Naive thymus-derived CD4-positive, alpha-beta T cell (primary cell): ENCODE measurements at regions of chr7 and their contacts with region 1.

Region 1: GRCh38 chr7:2978403-2978802 is 65.3 kb downstream of the CARD11 start:
- DNase-seq: peak in 8 of 9 donors; percentile 29 to 80 (median 45)
- ATAC-seq: peak; percentile 78
- H3K4me3 ChIP-seq: peak overlapping the region; percentile 45
- H3K4me3 Mint-ChIP-seq: peak overlapping the region; percentile 82 to 93 (median 87)
- H3K27ac ChIP-seq: peak overlapping the region; percentile 65
- H3K27ac Mint-ChIP-seq: peak overlapping the region; percentile 80 to 96 (median 91)
- H3K4me1 ChIP-seq: peaks cover 24 to 47% of the 10 kb centered on the region in 2 donors
- H3K4me1 Mint-ChIP-seq: peaks cover 57 to 80% (median 68%) of the 10 kb centered on the region in 7 donors
- H3K27me3 ChIP-seq: no peaks in the 10 kb centered on the region
- H3K27me3 Mint-ChIP-seq: no peaks in the 10 kb centered on the region

Region 2: GRCh38 chr7:1503816-1504775 is 1474.3 kb before region 1 on chr7 and contains the start of gene INTS1:
- CTCF ChIA-PET with region 1: no interaction called
- POLR2A ChIA-PET with region 1: no interaction called
- intact Hi-C with region 1: no loop called
- DNase-seq: peak; percentile 82 to 93 (median 88)
- ATAC-seq: peak; percentile 96
- H3K4me3 ChIP-seq: peak within 1 kb of the TSS; percentile 77
- H3K4me3 Mint-ChIP-seq: peak within 1 kb of the TSS; percentile 80 to 94 (median 87)
- H3K27ac ChIP-seq: peak within 1 kb of the TSS; percentile 77
- H3K27ac Mint-ChIP-seq: peak within 1 kb of the TSS in 8 of 9 donors; percentile 59 to 88 (median 77)
- H3K4me1 ChIP-seq: peaks cover 18 to 35% of the 10 kb centered on the region in 2 donors
- H3K4me1 Mint-ChIP-seq: peaks cover 35 to 60% (median 42%) of the 10 kb centered on the region in 7 donors
- H3K27me3 ChIP-seq: no peaks in the 10 kb centered on the region
- H3K27me3 Mint-ChIP-seq: peaks cover 0 to 4% (median 0%) of the 10 kb centered on the region in 5 donors
- total RNA-seq, gene INTS1: 82.0 to 157 (median 111) TPM

Region 3: DNA sequence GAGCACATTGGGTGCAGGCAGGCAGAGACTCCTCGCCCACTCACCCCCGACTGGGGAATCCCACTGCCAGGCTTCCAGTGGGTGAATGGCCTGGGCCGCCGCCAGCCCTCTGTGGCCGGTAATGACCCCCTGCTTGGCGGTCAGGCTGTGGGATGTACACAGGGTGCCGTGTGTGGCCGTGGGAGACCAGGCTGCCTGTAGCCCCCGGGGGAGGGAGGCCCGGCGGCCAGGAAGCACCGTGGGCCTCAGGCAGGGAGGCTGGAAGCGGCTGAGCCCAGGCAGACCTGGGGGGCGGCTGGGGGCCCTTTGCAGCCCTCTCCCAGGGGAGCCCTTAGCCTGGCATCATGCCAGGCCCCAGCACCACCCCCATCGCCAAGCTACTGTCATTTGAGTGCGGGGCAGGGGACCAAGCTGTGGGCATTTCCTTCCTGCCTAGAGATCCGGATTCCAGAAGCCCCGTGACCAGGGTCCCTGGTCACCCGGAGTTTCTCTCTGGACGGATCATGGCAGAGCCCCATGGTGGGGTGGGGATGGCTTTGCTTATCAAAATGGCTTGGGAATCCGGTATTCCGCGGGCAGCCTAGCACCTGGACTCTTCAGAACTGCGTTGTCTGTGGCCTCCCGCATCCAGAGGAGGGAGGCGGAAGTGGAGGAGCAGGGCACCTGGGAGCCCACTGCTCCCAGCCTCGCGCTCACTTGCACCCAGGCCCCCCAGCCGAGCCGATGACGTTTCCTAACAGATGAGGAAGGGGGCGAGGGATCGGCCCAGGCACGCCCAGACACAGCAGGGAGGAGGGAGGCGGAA is 345.5 kb before region 1 on chr7:
- CTCF ChIA-PET with region 1: no interaction called
- POLR2A ChIA-PET with region 1: no interaction called
- intact Hi-C with region 1: no loop called
- DNase-seq: peak in 8 of 9 donors; percentile 24 to 73 (median 37)
- ATAC-seq: no peak
- H3K4me3 ChIP-seq: peak overlapping the region; percentile 58
- H3K4me3 Mint-ChIP-seq: peak overlapping the region; percentile 86 to 96 (median 89)
- H3K27ac ChIP-seq: peak overlapping the region; percentile 79
- H3K27ac Mint-ChIP-seq: peak overlapping the region in 8 of 9 donors; percentile 72 to 88 (median 81)
- H3K4me1 ChIP-seq: peaks cover 3 to 16% of the 10 kb centered on the region in 2 donors
- H3K4me1 Mint-ChIP-seq: peaks cover 0 to 19% (median 15%) of the 10 kb centered on the region in 7 donors
- H3K27me3 ChIP-seq: no peaks in the 10 kb centered on the region
- H3K27me3 Mint-ChIP-seq: peaks cover 0 to 4% (median 0%) of the 10 kb centered on the region in 5 donors

Region 4: GRCh38 chr7:2870471-2870931 is 107.9 kb before region 1 on chr7:
- CTCF ChIA-PET with region 1: no interaction called
- POLR2A ChIA-PET with region 1: no interaction called
- intact Hi-C with region 1: loop called in 1 of 2 experiments (anchors 1 kb)
- DNase-seq: peak in 8 of 9 donors; percentile 49 to 69 (median 60)
- ATAC-seq: peak; percentile 93
- H3K4me3 ChIP-seq: peak overlapping the region; percentile 70
- H3K4me3 Mint-ChIP-seq: peak overlapping the region; percentile 81 to 100 (median 88)
- H3K27ac ChIP-seq: peak overlapping the region; percentile 58
- H3K27ac Mint-ChIP-seq: peak overlapping the region; percentile 77 to 96 (median 91)
- H3K4me1 ChIP-seq: peaks cover 4 to 24% of the 10 kb centered on the region in 2 donors
- H3K4me1 Mint-ChIP-seq: peaks cover 19 to 71% (median 62%) of the 10 kb centered on the region in 7 donors
- H3K27me3 ChIP-seq: no peaks in the 10 kb centered on the region
- H3K27me3 Mint-ChIP-seq: no peaks in the 10 kb centered on the region

Region 5: DNA sequence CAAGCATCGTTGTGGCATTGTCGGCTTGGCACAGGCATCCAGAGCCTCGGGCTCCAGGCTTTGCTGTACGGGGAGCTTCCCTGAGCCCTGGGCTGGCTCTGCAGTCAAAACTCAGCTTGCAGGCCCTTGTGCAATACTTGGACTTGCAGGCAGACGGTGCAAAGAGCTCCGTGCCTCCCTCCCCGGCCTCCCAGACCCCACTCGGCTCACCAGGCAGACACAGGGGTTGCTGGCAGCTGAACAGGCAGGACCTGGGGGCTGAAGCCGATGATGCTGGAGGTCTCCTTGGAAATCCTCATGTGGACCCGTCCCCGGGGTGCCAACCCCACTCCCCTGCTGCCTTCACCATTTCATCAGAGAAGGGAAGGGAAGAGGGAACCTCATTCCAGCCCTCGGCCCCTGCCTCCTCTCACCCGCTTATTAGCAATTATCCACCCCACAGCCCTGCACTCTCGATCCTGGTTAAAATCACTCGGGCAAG is 74.7 kb before region 1 on chr7:
- CTCF ChIA-PET with region 1: no interaction called
- POLR2A ChIA-PET with region 1: no interaction called
- intact Hi-C with region 1: loop called in 1 of 2 experiments (anchors 5 kb)
- DNase-seq: no peak
- ATAC-seq: peak; percentile 10
- H3K4me3 ChIP-seq: no peak overlapping the region
- H3K4me3 Mint-ChIP-seq: no peak overlapping the region
- H3K27ac ChIP-seq: no peak overlapping the region
- H3K27ac Mint-ChIP-seq: peak overlapping the region in 4 of 9 donors; percentile 47 to 78 (median 65)
- H3K4me1 ChIP-seq: peaks cover 0 to 19% of the 10 kb centered on the region in 2 donors
- H3K4me1 Mint-ChIP-seq: peaks cover 0 to 40% (median 2%) of the 10 kb centered on the region in 7 donors
- H3K27me3 ChIP-seq: no peaks in the 10 kb centered on the region
- H3K27me3 Mint-ChIP-seq: no peaks in the 10 kb centered on the region

Region 6: GRCh38 chr7:2956526-2957368 is 21.7 kb before region 1 on chr7:
- CTCF ChIA-PET with region 1: interaction called, 3 read pairs
- POLR2A ChIA-PET with region 1: no interaction called
- intact Hi-C with region 1: loop called in 1 of 2 experiments (anchors 2 kb)
- DNase-seq: peak in 1 of 9 donors; percentile 42
- ATAC-seq: peak; percentile 39
- H3K4me3 ChIP-seq: no peak overlapping the region
- H3K4me3 Mint-ChIP-seq: peak overlapping the region in 1 of 10 donors; percentile 41
- H3K27ac ChIP-seq: peak overlapping the region; percentile 14
- H3K27ac Mint-ChIP-seq: peak overlapping the region in 5 of 9 donors; percentile 24 to 85 (median 81)
- H3K4me1 ChIP-seq: peaks cover 29 to 37% of the 10 kb centered on the region in 2 donors
- H3K4me1 Mint-ChIP-seq: peaks cover 30 to 82% (median 70%) of the 10 kb centered on the region in 7 donors
- H3K27me3 ChIP-seq: no peaks in the 10 kb centered on the region
- H3K27me3 Mint-ChIP-seq: no peaks in the 10 kb centered on the region

Region 7: DNA sequence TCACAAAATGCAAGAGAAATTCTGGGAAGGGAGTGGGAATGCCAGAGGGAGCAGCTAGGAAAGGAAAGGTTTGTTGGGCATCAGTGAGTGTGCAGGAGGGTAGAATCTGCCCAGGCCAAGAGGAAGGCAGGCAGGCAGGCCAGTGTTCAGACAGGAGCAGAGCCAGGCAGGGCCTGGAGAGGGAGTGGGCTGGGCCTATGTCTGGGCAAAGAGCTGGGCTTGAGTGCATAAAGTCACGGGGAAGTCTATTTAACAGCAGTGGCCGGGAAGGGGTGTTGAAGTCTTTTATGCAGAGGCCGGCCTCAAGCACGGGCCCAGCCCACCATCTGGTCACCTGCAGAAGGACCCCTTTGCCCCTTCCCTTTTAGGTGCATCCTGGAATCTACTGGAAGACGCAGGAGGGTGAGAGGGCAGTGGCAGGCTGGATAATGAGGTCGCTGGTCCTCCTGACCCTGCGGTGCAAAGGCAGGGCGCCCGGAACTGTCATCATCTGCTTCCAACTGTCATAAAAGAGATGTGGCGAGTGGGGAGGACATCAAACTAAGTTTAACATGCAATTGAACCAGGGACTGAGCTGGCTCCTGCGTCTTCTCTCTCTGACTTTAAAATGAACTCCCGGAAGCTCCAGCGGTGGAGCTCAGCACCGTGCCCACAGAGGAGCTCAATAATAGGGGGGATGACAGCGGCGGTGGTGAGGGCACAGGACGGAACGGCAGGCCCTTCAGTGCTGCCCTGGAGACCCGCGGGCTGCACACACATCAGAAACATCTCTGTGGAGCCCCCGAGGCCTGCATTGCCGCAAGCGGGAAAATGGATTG is 35.8 kb after region 1 on chr7:
- CTCF ChIA-PET with region 1: interaction called, 3 read pairs
- POLR2A ChIA-PET with region 1: no interaction called
- intact Hi-C with region 1: loop called in 1 of 2 experiments (anchors 5 kb)
- DNase-seq: no peak
- ATAC-seq: no peak
- H3K4me3 ChIP-seq: no peak overlapping the region
- H3K4me3 Mint-ChIP-seq: no peak overlapping the region
- H3K27ac ChIP-seq: no peak overlapping the region
- H3K27ac Mint-ChIP-seq: peak overlapping the region in 6 of 9 donors; percentile 31 to 84 (median 61)
- H3K4me1 ChIP-seq: peaks cover 19 to 23% of the 10 kb centered on the region in 2 donors
- H3K4me1 Mint-ChIP-seq: peaks cover 36 to 65% (median 57%) of the 10 kb centered on the region in 7 donors
- H3K27me3 ChIP-seq: no peaks in the 10 kb centered on the region
- H3K27me3 Mint-ChIP-seq: no peaks in the 10 kb centered on the region